ENCODE measurements at regions of chr3 and their contacts with region 1.

Region 1: DNA sequence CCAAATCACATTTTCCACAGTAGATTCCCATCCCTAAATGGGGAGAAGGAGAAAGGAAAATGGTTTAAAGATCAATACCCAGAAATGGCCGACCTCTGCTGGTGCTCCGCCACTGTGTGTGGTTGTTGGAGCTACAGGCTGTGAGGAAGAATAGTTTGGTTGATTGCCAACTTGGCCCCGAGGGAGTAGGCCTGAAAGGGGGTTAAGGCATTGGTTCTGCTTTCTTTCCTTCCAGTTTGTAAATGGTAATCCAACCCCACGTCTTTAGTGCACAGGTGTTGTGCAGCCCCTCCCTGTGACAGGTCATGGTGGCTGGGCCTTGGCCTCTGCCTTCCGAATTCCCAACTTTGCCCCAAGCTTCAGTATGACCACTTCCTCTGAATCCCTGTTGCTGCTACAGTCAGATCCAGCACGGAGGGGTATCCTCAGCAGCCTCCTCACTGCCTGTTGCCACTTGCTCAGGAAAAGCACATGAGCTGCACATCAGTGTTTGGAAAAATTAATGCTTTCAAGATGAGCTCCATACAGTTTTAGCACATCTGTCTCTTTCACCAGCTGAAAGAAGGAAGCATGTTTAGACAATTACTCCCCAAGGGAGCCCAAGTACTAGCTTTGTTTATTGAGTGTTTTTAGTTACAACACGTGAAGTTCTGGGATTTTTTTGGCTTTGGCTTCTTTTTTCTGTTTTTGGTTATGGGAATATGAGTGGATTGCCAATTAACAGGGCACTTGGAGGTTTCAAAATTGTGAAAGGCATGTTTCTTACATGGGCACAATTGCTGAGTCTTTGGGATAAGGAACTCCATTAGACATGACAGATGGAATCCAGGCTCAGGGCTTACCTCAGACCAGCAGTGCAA is 92.3 kb upstream of the ROPN1 start:
- DNase-seq: no peak
- ATAC-seq: peak; percentile 22 to 75
- H3K4me3 ChIP-seq: no peak overlapping the region
- H3K27ac ChIP-seq: peak overlapping the region; percentile 12 to 68 (median 42)
- H3K4me1 ChIP-seq: peaks cover 11 to 24% of the 10 kb centered on the region in 2 donors
- H3K27me3 ChIP-seq: no peaks in the 10 kb centered on the region
- CTCF ChIP-seq: no peak
- POLR2A ChIP-seq: no peak

Region 2: DNA sequence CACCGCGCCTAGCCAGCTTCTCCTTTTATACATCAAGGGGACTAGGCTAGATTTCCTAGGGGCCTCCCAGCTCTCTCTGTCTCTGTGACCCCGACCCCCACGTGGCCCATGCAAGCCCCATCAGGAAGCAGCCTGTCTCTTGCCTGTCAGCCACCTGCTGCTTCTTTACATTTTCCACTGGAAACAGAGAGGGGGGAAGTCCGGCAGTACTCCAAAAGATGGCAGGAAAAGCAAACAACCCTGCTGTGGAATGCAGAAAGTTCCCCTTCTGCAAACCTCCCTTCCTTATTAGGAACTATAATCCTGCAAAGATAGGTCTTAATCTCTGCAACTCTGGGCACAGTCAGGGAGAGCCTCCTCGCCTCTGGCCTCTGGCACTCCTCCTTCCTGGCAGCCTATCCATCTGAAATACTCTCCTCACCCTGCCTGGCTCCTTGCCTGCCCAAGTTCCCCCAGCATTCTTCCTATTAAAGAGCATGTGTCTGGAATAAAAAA is 452.0 kb before region 1 on chr3:
- in situ Hi-C with region 1: no loop called
- intact Hi-C with region 1: no loop called
- DNase-seq: no peak
- ATAC-seq: no peak
- H3K4me3 ChIP-seq: no peak overlapping the region
- H3K27ac ChIP-seq: no peak overlapping the region
- H3K4me1 ChIP-seq: no peaks in the 10 kb centered on the region
- H3K27me3 ChIP-seq: no peaks in the 10 kb centered on the region
- CTCF ChIP-seq: no peak
- POLR2A ChIP-seq: no peak

Region 3: GRCh38 chr3:124014366-124014942 is 69.8 kb before region 1 on chr3:
- in situ Hi-C with region 1: loop called in 1 of 4 experiments (anchors 5 kb)
- intact Hi-C with region 1: loop called (anchors 1 kb)
- DNase-seq: no peak
- ATAC-seq: no peak
- H3K4me3 ChIP-seq: no peak overlapping the region
- H3K27ac ChIP-seq: no peak overlapping the region
- H3K4me1 ChIP-seq: no peaks in the 10 kb centered on the region
- H3K27me3 ChIP-seq: no peaks in the 10 kb centered on the region
- CTCF ChIP-seq: no peak
- POLR2A ChIP-seq: no peak

Region 4: GRCh38 chr3:124094496-124094895 is 10.2 kb after region 1 on chr3:
- in situ Hi-C with region 1: no loop called
- intact Hi-C with region 1: no loop called
- DNase-seq: no peak
- ATAC-seq: no peak
- H3K4me3 ChIP-seq: no peak overlapping the region
- H3K27ac ChIP-seq: no peak overlapping the region
- H3K4me1 ChIP-seq: peaks cover 5 to 13% of the 10 kb centered on the region in 2 donors
- H3K27me3 ChIP-seq: no peaks in the 10 kb centered on the region
- CTCF ChIP-seq: no peak
- POLR2A ChIP-seq: no peak

Region 5: GRCh38 chr3:124107104-124107890 is 23.0 kb after region 1 on chr3:
- in situ Hi-C with region 1: no loop called
- intact Hi-C with region 1: no loop called
- DNase-seq: no peak
- ATAC-seq: no peak
- H3K4me3 ChIP-seq: no peak overlapping the region
- H3K27ac ChIP-seq: no peak overlapping the region
- H3K4me1 ChIP-seq: peaks cover under 1 to 10% of the 10 kb centered on the region in 2 donors
- H3K27me3 ChIP-seq: no peaks in the 10 kb centered on the region
- CTCF ChIP-seq: no peak
- POLR2A ChIP-seq: no peak

Region 6: GRCh38 chr3:124246949-124247348 is 162.7 kb after region 1 on chr3:
- in situ Hi-C with region 1: no loop called
- intact Hi-C with region 1: loop called (anchors 5 kb)
- DNase-seq: peak in 1 of 2 donors; percentile 20
- ATAC-seq: peak in 1 of 2 donors; percentile 57
- H3K4me3 ChIP-seq: no peak overlapping the region
- H3K27ac ChIP-seq: peak overlapping the region; percentile 66 to 88 (median 82)
- H3K4me1 ChIP-seq: peaks cover 28 to 47% of the 10 kb centered on the region in 2 donors
- H3K27me3 ChIP-seq: no peaks in the 10 kb centered on the region
- CTCF ChIP-seq: peak in 4 of 5 experiments; percentile 19 to 48 (median 38)
- POLR2A ChIP-seq: no peak

Measured in gastrocnemius medialis (tissue), 4 donors.